CD8-positive, alpha-beta memory T cell (primary cell): ENCODE measurements at regions of chr16 and their contacts with region 1.

Region 1: GRCh38 chr16:53054670-53055485 is at the start of gene CHD9:
- DNase-seq: peak; percentile 66 to 81 (median 79)
- H3K4me3 ChIP-seq: peak within 1 kb of the TSS; percentile 94
- H3K4me3 Mint-ChIP-seq: peak within 1 kb of the TSS; percentile 82 to 96 (median 90)
- H3K27ac ChIP-seq: peak within 1 kb of the TSS; percentile 76
- H3K27ac Mint-ChIP-seq: peak within 1 kb of the TSS; percentile 44 to 95 (median 90)
- H3K4me1 ChIP-seq: peaks cover 19% of the 10 kb centered on the region
- H3K4me1 Mint-ChIP-seq: peaks cover 34 to 45% (median 39%) of the 10 kb centered on the region in 3 donors
- H3K27me3 ChIP-seq: no peaks in the 10 kb centered on the region
- H3K27me3 Mint-ChIP-seq: no peaks in the 10 kb centered on the region
- total RNA-seq, gene CHD9: 17.4 to 21.8 TPM

Region 2: DNA sequence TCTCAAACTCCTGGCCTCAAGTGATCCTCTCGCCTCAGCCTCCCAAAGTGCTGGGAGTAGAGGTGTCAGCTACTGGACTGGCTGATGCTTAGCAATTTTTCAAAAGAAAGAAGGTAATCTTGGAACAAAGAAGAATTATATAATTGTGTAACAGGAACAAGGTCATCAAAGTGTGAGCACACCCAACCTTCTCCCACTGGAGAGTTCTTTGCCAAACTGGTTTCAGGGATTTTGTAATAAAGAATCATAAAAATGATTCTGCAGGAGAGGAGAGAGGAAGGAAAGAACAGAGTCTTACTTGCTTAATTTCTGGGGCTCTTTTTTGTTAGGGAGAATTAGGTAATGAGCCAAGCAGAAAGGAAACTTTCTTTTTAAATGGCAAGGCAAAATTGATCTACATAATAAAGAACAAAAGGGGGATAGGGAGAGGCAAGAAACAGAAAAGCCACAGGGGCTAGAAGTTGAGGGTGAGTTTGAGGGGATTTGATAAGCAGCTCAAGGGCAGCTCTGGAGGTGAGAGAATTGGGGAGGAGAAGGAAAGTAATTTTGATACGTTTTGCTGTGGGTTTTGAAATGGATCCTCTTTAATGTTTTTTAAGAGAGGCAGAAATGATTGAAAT is 23.4 kb before region 1 on chr16:
- CTCF ChIA-PET with region 1: no interaction called
- POLR2A ChIA-PET with region 1: no interaction called
- DNase-seq: no peak
- H3K4me3 ChIP-seq: no peak overlapping the region
- H3K4me3 Mint-ChIP-seq: no peak overlapping the region
- H3K27ac ChIP-seq: no peak overlapping the region
- H3K27ac Mint-ChIP-seq: no peak overlapping the region
- H3K4me1 ChIP-seq: no peaks in the 10 kb centered on the region
- H3K4me1 Mint-ChIP-seq: no peaks in the 10 kb centered on the region
- H3K27me3 ChIP-seq: no peaks in the 10 kb centered on the region
- H3K27me3 Mint-ChIP-seq: peaks cover 13 to 43% of the 10 kb centered on the region in 2 donors

Region 3: DNA sequence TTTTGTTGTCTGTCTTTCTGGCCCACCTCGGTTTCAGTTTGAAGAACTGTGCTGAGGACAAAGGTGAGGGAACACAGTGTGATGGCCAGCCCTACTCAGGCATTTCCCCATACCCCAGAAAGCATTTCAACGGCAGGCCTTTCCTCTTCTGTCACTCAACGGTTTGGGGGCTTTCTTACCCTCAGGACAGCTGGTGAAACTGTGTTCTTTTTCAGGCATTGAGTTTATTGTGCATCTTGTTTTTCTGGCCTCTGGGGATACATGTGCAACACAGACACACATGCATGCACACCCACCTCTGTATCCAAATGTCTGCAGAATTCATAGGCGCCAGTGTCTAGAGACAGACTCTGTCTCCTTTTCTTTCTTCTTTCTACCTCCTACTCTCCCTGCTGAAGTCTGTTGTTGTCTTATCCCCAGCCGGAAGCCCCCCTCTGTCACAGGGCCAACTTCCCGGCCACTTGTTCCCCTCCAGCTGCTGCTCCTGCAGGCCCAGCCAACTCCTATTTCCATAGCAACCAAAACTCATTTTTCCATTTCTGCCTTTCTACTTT is 16.9 kb after region 1 on chr16:
- CTCF ChIA-PET with region 1: interaction called, 66 read pairs
- POLR2A ChIA-PET with region 1: no interaction called
- DNase-seq: no peak
- H3K4me3 ChIP-seq: no peak overlapping the region
- H3K4me3 Mint-ChIP-seq: peak overlapping the region in 1 of 7 donors; percentile 75
- H3K27ac ChIP-seq: no peak overlapping the region
- H3K27ac Mint-ChIP-seq: peak overlapping the region in 3 of 8 donors; percentile 13 to 57 (median 24)
- H3K4me1 ChIP-seq: peaks cover 24% of the 10 kb centered on the region
- H3K4me1 Mint-ChIP-seq: peaks cover 49 to 62% (median 60%) of the 10 kb centered on the region in 3 donors
- H3K27me3 ChIP-seq: no peaks in the 10 kb centered on the region
- H3K27me3 Mint-ChIP-seq: no peaks in the 10 kb centered on the region

Region 4: GRCh38 chr16:53099318-53100130 is 44.6 kb after region 1 on chr16:
- CTCF ChIA-PET with region 1: interaction called, 23 read pairs
- POLR2A ChIA-PET with region 1: interaction called, 7 read pairs
- DNase-seq: peak; percentile 15 to 72 (median 65)
- H3K4me3 ChIP-seq: peak overlapping the region; percentile 49
- H3K4me3 Mint-ChIP-seq: peak overlapping the region; percentile 77 to 94 (median 88)
- H3K27ac ChIP-seq: peak overlapping the region; percentile 69
- H3K27ac Mint-ChIP-seq: peak overlapping the region; percentile 75 to 100 (median 95)
- H3K4me1 ChIP-seq: peaks cover 23% of the 10 kb centered on the region
- H3K4me1 Mint-ChIP-seq: peaks cover 32 to 46% (median 38%) of the 10 kb centered on the region in 3 donors
- H3K27me3 ChIP-seq: no peaks in the 10 kb centered on the region
- H3K27me3 Mint-ChIP-seq: no peaks in the 10 kb centered on the region

Region 5: DNA sequence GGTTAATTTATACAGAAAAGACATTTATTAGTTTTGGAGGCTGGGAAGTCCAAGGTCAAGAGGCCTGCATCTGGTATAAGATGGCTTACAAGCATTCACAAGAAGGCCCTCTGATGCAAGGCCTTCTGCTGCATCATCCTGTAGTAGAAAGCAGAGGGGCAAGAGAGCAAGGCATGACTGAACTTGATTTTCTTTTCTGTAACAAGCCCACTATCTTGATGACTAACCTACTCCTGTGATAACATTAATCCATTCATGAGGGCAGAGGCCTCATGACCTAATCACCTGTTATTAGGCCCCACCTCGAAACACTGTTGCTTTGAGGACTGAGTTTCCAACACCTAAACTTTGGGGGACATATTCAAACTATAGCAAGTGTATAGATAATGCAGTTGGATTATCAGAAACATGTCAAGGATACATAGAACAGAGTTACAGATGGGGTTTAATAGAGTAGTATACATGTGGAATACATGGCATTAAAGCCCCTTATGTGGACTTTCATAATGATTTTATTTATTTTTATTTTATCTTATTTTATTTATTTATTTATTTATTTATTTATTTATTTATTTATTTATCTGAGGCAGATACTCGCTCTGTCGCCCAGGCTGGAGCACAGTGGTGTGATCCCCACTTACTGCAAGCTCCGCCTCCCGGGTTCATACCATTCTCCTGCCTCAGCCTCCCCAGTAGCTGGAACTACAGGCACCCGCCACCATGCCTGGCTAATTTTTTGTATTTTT is 88.1 kb after region 1 on chr16:
- CTCF ChIA-PET with region 1: interaction called, 10 read pairs
- POLR2A ChIA-PET with region 1: no interaction called
- DNase-seq: no peak
- H3K4me3 ChIP-seq: no peak overlapping the region
- H3K4me3 Mint-ChIP-seq: no peak overlapping the region
- H3K27ac ChIP-seq: no peak overlapping the region
- H3K27ac Mint-ChIP-seq: peak overlapping the region in 1 of 8 donors; percentile 27
- H3K4me1 ChIP-seq: no peaks in the 10 kb centered on the region
- H3K4me1 Mint-ChIP-seq: peaks cover 15 to 35% (median 33%) of the 10 kb centered on the region in 3 donors
- H3K27me3 ChIP-seq: no peaks in the 10 kb centered on the region
- H3K27me3 Mint-ChIP-seq: no peaks in the 10 kb centered on the region

Region 6: DNA sequence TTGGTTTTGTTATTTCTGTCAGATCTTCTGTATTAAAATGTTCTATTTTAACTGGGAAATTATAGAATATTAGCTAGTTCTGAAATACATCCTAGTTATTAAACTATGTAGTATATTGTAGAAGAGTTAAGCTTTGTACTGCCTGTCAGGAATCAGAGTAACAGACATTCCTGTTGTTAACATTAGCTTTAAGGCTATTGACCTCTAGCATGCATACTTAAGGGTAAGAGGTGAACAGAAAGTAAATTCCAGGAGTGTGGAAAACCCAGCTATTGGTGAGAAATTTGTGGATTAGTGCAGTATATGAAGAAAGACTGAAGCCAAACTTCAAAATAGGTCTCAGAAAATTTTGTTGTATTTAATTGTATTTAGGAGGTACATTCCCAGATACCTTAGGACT is 111.2 kb after region 1 on chr16:
- CTCF ChIA-PET with region 1: interaction called, 113 read pairs
- POLR2A ChIA-PET with region 1: no interaction called
- DNase-seq: no peak
- H3K4me3 ChIP-seq: no peak overlapping the region
- H3K4me3 Mint-ChIP-seq: no peak overlapping the region
- H3K27ac ChIP-seq: no peak overlapping the region
- H3K27ac Mint-ChIP-seq: no peak overlapping the region
- H3K4me1 ChIP-seq: no peaks in the 10 kb centered on the region
- H3K4me1 Mint-ChIP-seq: peaks cover 21 to 39% (median 31%) of the 10 kb centered on the region in 3 donors
- H3K27me3 ChIP-seq: no peaks in the 10 kb centered on the region
- H3K27me3 Mint-ChIP-seq: no peaks in the 10 kb centered on the region